Transverse colon (tissue), 4 donors: ENCODE measurements at regions of chr4 and their contacts with region 1.

Region 1: DNA sequence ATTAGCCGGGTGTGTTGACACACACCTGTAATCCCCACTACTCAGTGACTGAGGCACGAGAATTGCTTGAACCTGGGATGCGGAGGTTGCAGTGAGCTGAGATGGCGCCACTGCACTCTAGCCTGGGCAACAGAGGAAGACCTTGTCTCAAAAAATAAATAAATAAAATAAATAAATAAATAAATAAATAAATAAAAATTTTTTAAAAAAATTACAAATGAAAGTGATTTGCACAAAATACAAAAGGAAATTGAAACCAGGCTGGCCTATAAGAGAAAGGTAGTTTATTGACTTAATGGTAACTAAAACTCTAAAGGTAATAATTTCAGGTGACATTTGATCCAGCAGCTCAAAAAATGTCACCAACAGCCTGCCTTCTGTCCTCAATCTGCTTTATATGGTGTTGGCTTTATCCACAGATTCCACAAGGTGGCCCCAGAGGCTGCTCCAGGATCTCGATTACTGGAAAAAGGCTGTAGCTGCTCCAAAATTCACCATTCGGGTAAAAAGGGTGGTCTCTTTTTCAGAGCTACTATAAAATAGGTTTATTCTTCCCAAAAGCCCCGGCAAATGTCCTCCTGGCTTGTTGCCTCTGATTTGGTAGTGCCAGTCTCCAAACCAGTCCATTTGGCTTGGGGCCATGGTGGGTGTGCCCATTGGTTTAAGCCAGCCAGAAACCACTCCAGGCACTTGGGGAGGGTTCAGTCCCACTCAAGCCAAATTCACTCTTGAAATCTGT is 61.4 kb upstream of the TRIM2 start:
- DNase-seq: peak; percentile 85
- H3K4me3 ChIP-seq: peak overlapping the region in 1 of 4 donors; percentile 26
- H3K27ac ChIP-seq: peak overlapping the region; percentile 20 to 60 (median 38)
- H3K4me1 ChIP-seq: peaks cover 0 to 14% (median 10%) of the 10 kb centered on the region in 4 donors
- H3K27me3 ChIP-seq: no peaks in the 10 kb centered on the region
- CTCF ChIP-seq: peak; percentile 84 to 93 (median 84)
- EP300 ChIP-seq: no peak
- POLR2A ChIP-seq: no peak

Region 2: GRCh38 chr4:153204247-153205027 is 61.6 kb after region 1 on chr4 and contains the start of gene TRIM2:
- in situ Hi-C with region 1: no loop called
- intact Hi-C with region 1: loop called (anchors 5 kb)
- DNase-seq: peak; percentile 86
- H3K4me3 ChIP-seq: peak within 1 kb of the TSS; percentile 13 to 49 (median 31)
- H3K27ac ChIP-seq: peak within 1 kb of the TSS; percentile 76 to 88 (median 84)
- H3K4me1 ChIP-seq: peaks cover 0 to 36% (median 18%) of the 10 kb centered on the region in 4 donors
- H3K27me3 ChIP-seq: no peaks in the 10 kb centered on the region
- CTCF ChIP-seq: no peak
- EP300 ChIP-seq: no peak
- POLR2A ChIP-seq: peak; percentile 37
- total RNA-seq, gene TRIM2: 71.8 to 124 (median 95.3) TPM

Region 3: GRCh38 chr4:153318696-153319320 is 175.9 kb after region 1 on chr4:
- in situ Hi-C with region 1: loop called (anchors 5 to 25 kb)
- intact Hi-C with region 1: loop called (anchors 5 kb)
- DNase-seq: no peak
- H3K4me3 ChIP-seq: no peak overlapping the region
- H3K27ac ChIP-seq: no peak overlapping the region
- H3K4me1 ChIP-seq: no peaks in the 10 kb centered on the region
- H3K27me3 ChIP-seq: no peaks in the 10 kb centered on the region
- CTCF ChIP-seq: peak; percentile 47 to 59 (median 56)
- EP300 ChIP-seq: no peak
- POLR2A ChIP-seq: no peak

Region 4: GRCh38 chr4:153326513-153326912 is 183.6 kb after region 1 on chr4:
- in situ Hi-C with region 1: loop called in 3 of 4 experiments (anchors 5 to 25 kb)
- intact Hi-C with region 1: loop called (anchors 5 kb)
- DNase-seq: peak; percentile 16
- H3K4me3 ChIP-seq: no peak overlapping the region
- H3K27ac ChIP-seq: no peak overlapping the region
- H3K4me1 ChIP-seq: no peaks in the 10 kb centered on the region
- H3K27me3 ChIP-seq: no peaks in the 10 kb centered on the region
- CTCF ChIP-seq: no peak
- EP300 ChIP-seq: no peak
- POLR2A ChIP-seq: no peak

Region 5: DNA sequence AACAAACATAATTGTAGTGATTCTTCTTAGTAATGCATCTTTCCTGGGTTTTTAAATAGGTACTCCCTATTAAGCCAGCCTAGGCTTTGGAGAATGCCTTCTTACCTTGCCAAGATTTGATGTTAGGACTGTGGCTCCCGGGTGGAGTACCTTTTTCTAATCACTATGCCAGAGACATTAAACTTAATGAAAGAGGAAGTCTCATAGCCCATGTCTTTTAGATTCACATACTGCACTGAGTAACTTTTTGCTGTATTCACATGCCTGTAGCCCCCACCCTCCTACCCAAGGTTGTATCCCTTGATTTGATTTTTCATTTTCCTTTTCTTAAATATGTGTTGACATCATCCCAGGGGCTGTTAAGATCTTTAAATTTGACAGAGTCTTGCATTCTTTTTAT is 437.0 kb after region 1 on chr4:
- in situ Hi-C with region 1: loop called in 2 of 4 experiments (anchors 10 to 25 kb)
- intact Hi-C with region 1: loop called (anchors 10 kb)
- DNase-seq: no peak
- H3K4me3 ChIP-seq: no peak overlapping the region
- H3K27ac ChIP-seq: no peak overlapping the region
- H3K4me1 ChIP-seq: peaks cover 0 to 18% (median 6%) of the 10 kb centered on the region in 4 donors
- H3K27me3 ChIP-seq: no peaks in the 10 kb centered on the region
- CTCF ChIP-seq: no peak
- EP300 ChIP-seq: no peak
- POLR2A ChIP-seq: no peak